ENCODE measurements at regions of chr2 and their contacts with region 1.

Region 1: GRCh38 chr2:241798631-241799521 is 10.1 kb upstream of the NEU4 start:
- DNase-seq: peak; percentile 9
- H3K4me3 ChIP-seq: no peak overlapping the region
- H3K27ac ChIP-seq: peak overlapping the region in 3 of 4 donors; percentile 82 to 87 (median 85)
- H3K4me1 ChIP-seq: peaks cover 19 to 56% (median 49%) of the 10 kb centered on the region in 4 donors
- H3K27me3 ChIP-seq: peaks cover 14% of the 10 kb centered on the region
- CTCF ChIP-seq: no peak
- EP300 ChIP-seq: no peak
- POLR2A ChIP-seq: no peak

Region 2: GRCh38 chr2:241680827-241681599 is 117.9 kb before region 1 on chr2:
- in situ Hi-C with region 1: no loop called
- intact Hi-C with region 1: no loop called
- DNase-seq: no peak
- H3K4me3 ChIP-seq: no peak overlapping the region
- H3K27ac ChIP-seq: peak overlapping the region in 2 of 4 donors; percentile 14 to 54
- H3K4me1 ChIP-seq: peaks cover 3 to 22% (median 6%) of the 10 kb centered on the region in 4 donors
- H3K27me3 ChIP-seq: no peaks in the 10 kb centered on the region
- CTCF ChIP-seq: no peak
- EP300 ChIP-seq: no peak
- POLR2A ChIP-seq: no peak

Region 3: DNA sequence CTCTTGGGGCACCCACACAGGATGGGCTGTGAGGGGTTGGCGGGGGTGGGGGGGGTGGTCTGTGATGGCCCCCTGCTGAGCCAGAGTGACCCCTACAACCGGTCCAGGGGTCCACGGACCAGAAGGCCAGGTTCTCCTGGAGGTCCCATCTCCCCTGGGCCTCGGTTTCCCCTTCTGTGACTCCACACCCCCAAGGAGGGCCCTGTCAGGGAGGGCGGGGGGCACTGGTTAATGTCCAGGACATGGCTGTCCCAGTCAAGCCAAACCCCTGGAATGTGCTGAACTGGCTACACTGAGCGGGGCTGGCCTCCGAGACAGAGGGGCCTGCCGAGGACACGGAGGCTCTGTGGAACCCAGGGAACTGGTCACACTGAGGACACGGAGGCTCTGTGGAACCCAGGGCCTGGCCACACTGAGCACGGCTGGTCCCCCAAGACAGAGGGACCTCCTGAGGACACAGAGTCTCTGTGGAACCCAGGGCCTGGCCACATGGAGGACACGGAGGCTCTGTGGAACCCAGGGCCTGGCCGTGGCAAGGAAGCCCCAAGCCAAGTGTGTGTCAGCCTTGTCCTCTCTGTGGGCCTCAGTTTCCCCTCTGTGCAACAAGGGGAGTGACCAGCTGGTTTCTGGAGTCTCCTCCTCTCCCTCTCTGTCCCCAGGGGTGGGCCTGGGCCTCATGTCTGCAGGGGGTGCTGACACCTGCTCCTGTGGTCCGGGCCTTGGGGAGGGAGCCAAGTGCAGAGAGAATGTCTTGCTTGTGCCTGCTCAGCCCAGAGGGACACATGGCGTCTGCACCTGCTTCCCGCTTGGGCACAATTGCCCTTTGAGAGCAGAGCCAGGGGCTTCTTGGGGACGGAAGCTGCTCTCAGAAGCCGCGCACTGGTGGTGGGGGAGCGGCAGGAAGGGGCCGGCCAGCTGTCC is 13.5 kb after region 1 on chr2:
- in situ Hi-C with region 1: no loop called
- intact Hi-C with region 1: loop called (anchors 1 kb)
- DNase-seq: no peak
- H3K4me3 ChIP-seq: no peak overlapping the region
- H3K27ac ChIP-seq: no peak overlapping the region
- H3K4me1 ChIP-seq: peaks cover 0 to 16% (median 9%) of the 10 kb centered on the region in 4 donors
- H3K27me3 ChIP-seq: no peaks in the 10 kb centered on the region
- CTCF ChIP-seq: no peak
- EP300 ChIP-seq: no peak
- POLR2A ChIP-seq: no peak

Measured in transverse colon (tissue), 4 donors.